ENCODE measurements at regions of chr2 and their contacts with region 1.

Region 1: GRCh38 chr2:55175254-55176025 is 56.7 kb downstream of the CLHC1 start:
- DNase-seq: no peak
- H3K4me3 ChIP-seq: no peak overlapping the region
- H3K27ac ChIP-seq: no peak overlapping the region
- H3K4me1 ChIP-seq: no peaks in the 10 kb centered on the region
- H3K27me3 ChIP-seq: no peaks in the 10 kb centered on the region
- CTCF ChIP-seq: peak; percentile 43 to 70 (median 69)
- EP300 ChIP-seq: no peak
- POLR2A ChIP-seq: no peak

Region 2: GRCh38 chr2:54899576-54900200 is 275.8 kb before region 1 on chr2:
- intact Hi-C with region 1: loop called in 3 of 4 experiments (anchors 2 to 10 kb)
- DNase-seq: peak in 1 of 5 donors; percentile 22
- H3K4me3 ChIP-seq: no peak overlapping the region
- H3K27ac ChIP-seq: no peak overlapping the region
- H3K4me1 ChIP-seq: no peaks in the 10 kb centered on the region
- H3K27me3 ChIP-seq: no peaks in the 10 kb centered on the region
- CTCF ChIP-seq: peak; percentile 15 to 69 (median 58)
- EP300 ChIP-seq: no peak
- POLR2A ChIP-seq: no peak